ENCODE measurements at regions of chr1 and their contacts with region 1.

Region 1: DNA sequence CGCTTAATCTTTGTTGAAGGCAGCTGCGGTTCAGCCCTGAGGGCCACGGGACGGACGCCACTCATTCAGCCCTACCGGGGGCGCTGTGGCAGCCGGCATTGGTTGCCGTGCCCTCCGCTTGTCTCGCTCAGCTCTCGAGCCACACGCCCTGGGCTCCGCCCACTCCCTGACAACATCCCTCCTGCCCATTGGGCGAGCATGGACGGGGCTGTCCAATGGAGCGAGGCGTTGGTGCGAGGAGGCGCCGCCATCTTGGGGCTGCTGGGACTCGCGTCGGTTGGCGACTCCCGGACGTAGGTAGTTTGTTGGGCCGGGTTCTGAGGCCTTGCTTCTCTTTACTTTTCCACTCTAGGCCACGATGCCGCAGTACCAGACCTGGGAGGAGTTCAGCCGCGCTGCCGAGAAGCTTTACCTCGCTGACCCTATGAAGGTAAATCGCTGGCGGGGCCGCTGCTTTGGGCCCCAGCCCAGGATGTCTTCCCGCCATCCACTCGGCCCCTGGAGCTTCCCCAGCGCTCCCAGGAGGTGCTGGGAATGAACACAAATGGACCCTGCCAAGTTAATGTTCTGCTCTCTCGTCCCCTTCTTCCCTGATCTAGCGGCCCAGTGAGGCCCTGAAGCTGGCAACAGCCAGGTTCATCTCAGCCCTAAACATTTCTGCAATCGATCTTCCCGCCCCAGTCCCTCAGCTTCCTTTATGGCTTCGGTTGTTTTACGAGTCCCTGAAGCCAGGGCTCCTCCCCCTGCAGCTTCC is at the start of gene SRP9:
- DNase-seq: peak; percentile 97 to 98 (median 98)
- H3K4me3 ChIP-seq: peak within 1 kb of the TSS; percentile 63 to 90 (median 75)
- H3K4me3 Mint-ChIP-seq: no peak within 1 kb of the TSS
- H3K27ac ChIP-seq: peak within 1 kb of the TSS; percentile 95 to 98
- H3K27ac Mint-ChIP-seq: no peak within 1 kb of the TSS
- H3K4me1 ChIP-seq: peaks cover 47 to 48% of the 10 kb centered on the region in 2 donors
- H3K4me1 Mint-ChIP-seq: peaks cover 25% of the 10 kb centered on the region
- H3K27me3 ChIP-seq: no peaks in the 10 kb centered on the region
- H3K27me3 Mint-ChIP-seq: peaks cover 0 to 2% (median 1%) of the 10 kb centered on the region in 3 donors
- CTCF ChIP-seq: peak; percentile 90
- polyA plus RNA-seq, gene SRP9: 89.5 to 329 (median 281) TPM

Region 2: DNA sequence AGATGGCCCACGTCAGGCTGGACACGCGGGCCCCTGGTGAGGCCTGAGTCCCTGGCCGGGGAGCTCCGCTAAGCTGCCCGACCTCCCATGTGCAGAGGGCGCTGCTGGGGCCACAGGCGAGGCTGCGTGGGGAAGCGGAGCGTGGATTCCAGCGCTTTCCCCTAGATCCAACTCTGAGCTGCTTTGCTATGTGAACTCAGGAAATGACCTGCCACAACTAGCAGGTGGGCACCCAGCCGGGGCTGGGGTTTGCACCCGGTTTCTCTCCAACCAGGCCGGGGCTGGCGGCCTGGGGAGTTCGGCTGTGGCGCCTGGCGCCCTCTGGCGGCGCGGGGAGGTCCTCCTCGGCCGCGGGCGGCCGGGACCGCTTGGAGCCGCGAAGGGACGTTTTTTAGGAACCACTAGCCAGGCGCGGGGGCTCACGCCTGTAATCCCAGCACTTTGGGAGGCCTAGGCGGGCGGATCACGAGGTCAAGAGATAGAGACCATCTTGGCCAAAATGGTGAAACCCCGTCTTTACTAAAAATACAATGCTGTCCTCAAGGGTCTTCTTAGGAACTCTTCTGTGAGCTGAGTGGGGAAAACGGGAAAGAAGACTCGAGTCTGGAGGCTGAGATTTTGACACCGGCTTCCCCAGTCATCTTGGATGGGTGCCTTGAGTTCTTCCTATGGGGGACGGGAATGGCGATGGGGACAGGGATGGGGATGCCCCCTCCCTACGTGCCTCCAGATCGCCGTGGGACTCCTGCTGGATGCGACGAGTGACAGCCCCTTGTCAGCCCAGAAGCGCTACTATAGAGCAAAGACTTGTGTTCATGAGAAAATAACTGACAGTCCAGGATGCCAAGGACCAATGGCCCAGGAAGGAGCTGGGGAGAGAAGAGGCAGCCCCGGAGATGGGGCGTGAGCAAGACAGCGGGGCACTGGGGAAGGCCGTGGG is 133.7 kb after region 1 on chr1:
- intact Hi-C with region 1: loop called (anchors 5 to 10 kb)
- DNase-seq: peak; percentile 42 to 47 (median 45)
- H3K4me3 ChIP-seq: no peak overlapping the region
- H3K4me3 Mint-ChIP-seq: no peak overlapping the region
- H3K27ac ChIP-seq: no peak overlapping the region
- H3K27ac Mint-ChIP-seq: no peak overlapping the region
- H3K4me1 ChIP-seq: peaks cover 0 to 6% of the 10 kb centered on the region in 2 donors
- H3K4me1 Mint-ChIP-seq: no peaks in the 10 kb centered on the region
- H3K27me3 ChIP-seq: no peaks in the 10 kb centered on the region
- H3K27me3 Mint-ChIP-seq: peaks cover 0 to 2% (median 2%) of the 10 kb centered on the region in 3 donors
- CTCF ChIP-seq: peak; percentile 89

Region 3: GRCh38 chr1:225977937-225978748 is 200.4 kb after region 1 on chr1:
- intact Hi-C with region 1: loop called (anchors 5 to 10 kb)
- DNase-seq: no peak
- H3K4me3 ChIP-seq: no peak overlapping the region
- H3K4me3 Mint-ChIP-seq: no peak overlapping the region
- H3K27ac ChIP-seq: no peak overlapping the region
- H3K27ac Mint-ChIP-seq: peak overlapping the region in 3 of 7 donors; percentile 1 to 51 (median 6)
- H3K4me1 ChIP-seq: peaks cover 0 to 5% of the 10 kb centered on the region in 2 donors
- H3K4me1 Mint-ChIP-seq: peaks cover 16% of the 10 kb centered on the region
- H3K27me3 ChIP-seq: no peaks in the 10 kb centered on the region
- H3K27me3 Mint-ChIP-seq: peaks cover 0 to 3% (median 0%) of the 10 kb centered on the region in 3 donors
- CTCF ChIP-seq: no peak

Measured in CD14-positive monocyte (primary cell).